ENCODE measurements at regions of chr6 and their contacts with region 1.

Region 1: GRCh38 chr6:149431905-149432775 is 32.1 kb downstream of the SUMO4 start:
- DNase-seq: no peak
- H3K4me3 ChIP-seq: no peak overlapping the region
- H3K27me3 ChIP-seq: peaks cover 8% of the 10 kb centered on the region
- CTCF ChIP-seq: peak; percentile 87

Region 2: GRCh38 chr6:149075616-149076364 is 356.4 kb before region 1 on chr6:
- CTCF ChIA-PET with region 1: interaction called, 38 read pairs
- POLR2A ChIA-PET with region 1: no interaction called
- DNase-seq: no peak
- H3K4me3 ChIP-seq: no peak overlapping the region
- H3K27me3 ChIP-seq: no peaks in the 10 kb centered on the region
- CTCF ChIP-seq: no peak

Region 3: DNA sequence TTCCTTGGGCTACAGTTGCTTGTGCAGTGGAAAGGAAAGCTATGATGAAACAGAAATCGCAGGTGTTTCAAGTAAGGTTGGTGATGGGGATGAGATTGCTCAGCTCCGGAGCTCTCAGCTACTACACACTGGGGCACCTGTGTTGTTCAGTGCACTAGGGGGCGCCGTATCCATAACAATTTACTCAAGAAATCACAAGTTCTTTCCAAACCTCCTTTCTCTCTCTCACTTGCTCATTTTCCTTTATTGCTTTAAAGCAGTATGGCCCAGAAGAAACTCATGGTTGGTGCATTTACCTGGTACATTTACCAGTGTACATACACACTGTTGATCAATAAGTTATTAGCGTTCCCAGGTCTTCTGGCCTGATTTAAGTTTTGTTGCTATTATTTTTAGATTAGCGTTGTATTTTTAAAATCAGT is 349.8 kb before region 1 on chr6:
- CTCF ChIA-PET with region 1: interaction called, 38 read pairs
- POLR2A ChIA-PET with region 1: no interaction called
- DNase-seq: no peak
- H3K4me3 ChIP-seq: no peak overlapping the region
- H3K27me3 ChIP-seq: no peaks in the 10 kb centered on the region
- CTCF ChIP-seq: peak; percentile 79

Region 4: DNA sequence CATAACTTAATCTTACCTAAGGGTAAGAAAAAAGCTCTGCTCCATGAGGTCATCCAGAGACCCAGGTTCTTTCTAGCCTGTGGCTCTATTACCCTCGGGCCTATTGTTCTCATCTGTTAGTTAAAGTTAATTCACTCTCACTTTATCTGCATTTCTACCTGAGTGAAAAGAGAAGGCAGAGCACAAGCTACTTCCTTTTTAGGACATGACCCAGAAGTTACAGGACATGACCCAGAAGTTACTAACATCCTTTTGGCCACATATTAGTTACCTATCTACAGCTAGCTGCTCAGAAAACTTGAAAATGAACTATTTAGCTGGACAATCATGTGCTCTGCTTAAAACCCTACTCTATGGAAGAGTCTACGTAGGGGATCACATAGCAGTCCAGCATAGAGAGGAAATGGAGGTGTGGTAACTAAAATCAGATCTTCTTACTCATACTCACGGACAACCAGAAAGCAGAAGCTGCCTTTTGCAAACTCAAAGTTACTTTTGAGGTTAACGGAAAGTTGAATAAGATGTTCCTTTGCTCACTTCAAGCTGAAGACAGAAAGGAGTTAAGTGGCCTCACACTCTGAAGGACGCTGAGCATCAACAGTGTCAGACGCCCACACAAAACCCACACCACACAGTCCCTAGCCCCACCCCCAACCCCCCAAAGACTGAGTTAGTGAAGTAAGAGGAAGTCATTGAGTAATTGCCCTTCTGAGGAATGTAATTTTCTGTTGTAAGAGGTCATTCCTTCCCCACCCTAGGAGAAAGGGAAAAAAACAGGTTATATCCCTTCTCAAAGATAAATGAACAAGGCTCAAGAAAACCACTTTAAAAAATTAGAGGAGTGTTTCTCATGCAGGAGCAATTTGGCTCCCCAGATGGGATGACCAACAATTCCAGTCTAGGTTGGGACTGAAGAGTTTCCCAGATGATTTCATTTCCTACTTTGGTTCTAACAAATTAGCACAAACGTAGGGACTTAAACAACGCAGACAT is 160.5 kb before region 1 on chr6:
- CTCF ChIA-PET with region 1: no interaction called
- POLR2A ChIA-PET with region 1: no interaction called
- DNase-seq: no peak
- H3K4me3 ChIP-seq: no peak overlapping the region
- H3K27me3 ChIP-seq: peaks cover 4% of the 10 kb centered on the region; the same call in 1 of the 2 replicates
- CTCF ChIP-seq: no peak

Region 5: DNA sequence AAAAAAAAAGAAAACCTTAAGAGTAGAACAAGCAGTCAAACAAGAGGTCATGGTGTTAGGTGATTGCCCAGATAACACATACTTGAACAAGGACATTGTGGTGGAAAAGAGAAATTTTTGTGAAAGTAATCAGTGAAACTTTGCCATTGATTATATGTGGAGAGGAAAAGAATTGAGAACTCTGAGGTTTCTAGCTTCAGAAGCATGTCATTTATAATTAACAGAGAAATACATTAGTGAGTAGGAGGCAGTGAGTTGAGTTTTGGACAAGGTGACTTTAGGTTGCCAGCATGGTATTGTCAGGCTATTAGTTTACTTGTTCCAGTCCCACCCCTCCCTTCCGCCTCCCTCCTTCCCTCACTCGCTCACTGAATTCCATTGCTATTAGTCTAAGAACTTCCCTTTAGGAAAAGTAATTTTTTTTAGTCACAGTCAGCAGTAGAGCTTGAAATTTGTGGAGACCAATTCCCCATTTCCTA is 97.4 kb before region 1 on chr6:
- CTCF ChIA-PET with region 1: no interaction called
- POLR2A ChIA-PET with region 1: no interaction called
- DNase-seq: peak; percentile 60
- H3K4me3 ChIP-seq: no peak overlapping the region
- H3K27me3 ChIP-seq: no peaks in the 10 kb centered on the region
- CTCF ChIP-seq: no peak

Region 6: GRCh38 chr6:149419696-149420404 is 12.3 kb before region 1 on chr6:
- CTCF ChIA-PET with region 1: interaction called, 23 read pairs
- POLR2A ChIA-PET with region 1: no interaction called
- DNase-seq: no peak
- H3K4me3 ChIP-seq: no peak overlapping the region
- H3K27me3 ChIP-seq: no peaks in the 10 kb centered on the region
- CTCF ChIP-seq: no peak

Region 7: GRCh38 chr6:149443411-149444181 is 11.5 kb after region 1 on chr6:
- CTCF ChIA-PET with region 1: interaction called, 20 read pairs
- POLR2A ChIA-PET with region 1: no interaction called
- DNase-seq: no peak
- H3K4me3 ChIP-seq: no peak overlapping the region
- H3K27me3 ChIP-seq: no peaks in the 10 kb centered on the region
- CTCF ChIP-seq: no peak

Region 8: DNA sequence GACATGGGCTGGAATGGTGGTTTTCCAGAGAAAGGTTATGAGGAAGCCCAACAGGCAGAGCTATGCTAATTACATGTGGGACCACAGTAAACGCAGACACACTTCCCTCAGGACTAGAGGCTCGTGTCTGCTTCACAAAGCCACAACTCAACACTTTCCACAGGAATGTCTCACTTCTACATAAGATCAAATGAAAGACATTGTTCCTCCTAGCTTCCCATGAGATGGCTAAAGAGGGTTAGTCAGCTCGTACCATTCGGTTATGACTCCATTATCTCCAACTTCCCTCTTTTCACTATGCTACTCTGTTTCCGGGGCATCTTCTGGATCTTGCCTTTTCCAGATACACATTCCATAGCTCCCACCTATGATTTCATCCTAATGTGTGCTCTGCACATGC is 81.8 kb after region 1 on chr6:
- CTCF ChIA-PET with region 1: interaction called, 25 read pairs
- POLR2A ChIA-PET with region 1: no interaction called
- DNase-seq: no peak
- H3K4me3 ChIP-seq: no peak overlapping the region
- H3K27me3 ChIP-seq: no peaks in the 10 kb centered on the region
- CTCF ChIP-seq: no peak

Measured in BJ (cell line).